Activated T-helper 2 cell treated with anti-CD3 and anti-CD28 coated beads, Interferon-gamma antibody, Interleukin-2, Interleukin-4, amounts not matched to agents 10 μg/mL and 5 μg/mL and 100 μg/mL, durations not matched to agents 14 hours and 24 hours and 36 hours (primary cell): ENCODE measurements at regions of chr2 and their contacts with region 1.

Region 1: DNA sequence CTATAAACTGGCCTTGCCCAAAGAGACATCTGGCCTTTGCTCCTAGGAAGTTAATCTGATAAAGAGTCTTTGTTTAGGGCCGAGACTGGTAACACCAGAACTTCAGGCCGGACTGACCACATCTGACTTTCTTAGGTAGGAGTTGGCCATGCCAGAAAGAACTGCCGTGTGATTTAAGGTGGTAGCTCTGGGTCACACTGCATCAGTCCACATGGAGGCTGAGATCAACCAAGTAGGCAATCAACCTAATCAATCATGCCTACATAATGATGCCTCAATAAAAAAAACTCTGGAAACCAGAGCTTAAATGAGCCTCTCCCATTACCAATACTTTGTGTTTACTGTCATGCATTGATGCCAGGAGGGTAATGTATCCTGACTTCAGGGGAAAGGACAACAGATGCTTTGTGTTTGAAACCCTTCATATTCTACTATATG is 44.1 kb upstream of the ORC2 start:
- DNase-seq: no peak
- H3K4me3 Mint-ChIP-seq: no peak overlapping the region
- H3K27ac Mint-ChIP-seq: no peak overlapping the region
- H3K4me1 Mint-ChIP-seq: no peaks in the 10 kb centered on the region
- H3K27me3 Mint-ChIP-seq: no peaks in the 10 kb centered on the region

Region 2: GRCh38 chr2:200086911-200087310 is 920.7 kb before region 1 on chr2:
- intact Hi-C with region 1: no loop called
- DNase-seq: no peak
- H3K4me3 Mint-ChIP-seq: no peak overlapping the region
- H3K27ac Mint-ChIP-seq: no peak overlapping the region
- H3K4me1 Mint-ChIP-seq: no peaks in the 10 kb centered on the region
- H3K27me3 Mint-ChIP-seq: no peaks in the 10 kb centered on the region

Region 3: GRCh38 chr2:201057087-201057521 is 49.5 kb after region 1 on chr2:
- intact Hi-C with region 1: loop called (anchors 10 kb)
- DNase-seq: no peak
- H3K4me3 Mint-ChIP-seq: no peak overlapping the region
- H3K27ac Mint-ChIP-seq: no peak overlapping the region
- H3K4me1 Mint-ChIP-seq: peaks cover 7% of the 10 kb centered on the region
- H3K27me3 Mint-ChIP-seq: no peaks in the 10 kb centered on the region